ENCODE measurements at regions of chrX and their contacts with region 1.

Region 1: DNA sequence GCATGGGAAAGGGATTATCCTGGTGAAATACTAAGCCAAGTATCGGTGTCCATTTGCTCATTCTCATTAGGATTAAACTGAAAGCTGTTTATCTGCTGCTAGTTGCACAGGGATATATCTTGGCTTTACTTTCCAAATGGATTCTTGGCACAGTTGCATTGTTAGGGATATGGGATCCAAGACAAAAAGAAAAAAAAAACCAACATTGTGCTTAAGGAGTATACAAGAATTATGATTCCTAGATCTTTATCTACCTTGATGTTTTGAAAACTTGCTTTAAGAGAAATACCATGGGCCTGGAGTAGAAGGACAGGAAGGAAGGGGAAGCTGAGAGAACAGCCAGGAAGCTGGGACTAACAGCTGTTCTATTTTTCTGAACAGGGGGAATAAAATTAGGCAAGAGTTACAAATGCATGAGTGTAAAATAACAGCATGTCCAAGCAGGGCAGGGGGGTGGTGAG is 107.6 kb downstream of the ATXN3L start:
- DNase-seq: peak; percentile 82
- H3K4me3 ChIP-seq: no peak overlapping the region
- H3K27ac ChIP-seq: peak overlapping the region; percentile 63
- H3K4me1 ChIP-seq: peaks cover 24% of the 10 kb centered on the region
- H3K27me3 ChIP-seq: no peaks in the 10 kb centered on the region
- CTCF ChIP-seq: no peak
- POLR2A ChIP-seq: no peak

Region 2: GRCh38 chrX:13123857-13124345 is 88.3 kb before region 1 on chrX:
- CTCF ChIA-PET with region 1: interaction called, 3 read pairs
- POLR2A ChIA-PET with region 1: no interaction called
- dilution Hi-C with region 1: no loop called
- intact Hi-C with region 1: loop called (anchors 1 kb)
- DNase-seq: peak; percentile 93
- H3K4me3 ChIP-seq: no peak overlapping the region
- H3K27ac ChIP-seq: peak overlapping the region; percentile 91
- H3K4me1 ChIP-seq: peaks cover 59% of the 10 kb centered on the region
- H3K27me3 ChIP-seq: no peaks in the 10 kb centered on the region
- CTCF ChIP-seq: no peak
- POLR2A ChIP-seq: peak; percentile 45

Region 3: DNA sequence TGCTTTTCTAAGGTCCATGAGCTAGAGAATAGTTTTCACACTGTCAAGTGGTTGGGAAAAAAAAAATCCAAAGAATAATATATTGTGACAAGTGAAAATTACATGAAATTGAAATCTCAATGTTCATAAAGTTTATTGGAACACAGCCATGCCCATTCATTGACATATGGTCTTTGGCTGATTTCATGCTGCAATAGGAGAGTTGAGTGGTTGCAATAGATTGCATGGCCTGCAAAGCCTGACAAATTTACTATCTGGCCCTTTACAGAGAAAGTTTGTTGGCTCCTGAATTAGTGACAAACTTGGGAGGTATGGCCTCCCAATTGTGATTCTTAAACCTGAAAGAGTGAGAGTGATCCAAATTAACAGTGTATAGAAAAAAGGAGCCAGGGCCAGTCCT is 52.3 kb before region 1 on chrX:
- CTCF ChIA-PET with region 1: no interaction called
- POLR2A ChIA-PET with region 1: no interaction called
- dilution Hi-C with region 1: no loop called
- intact Hi-C with region 1: loop called (anchors 2 kb)
- DNase-seq: no peak
- H3K4me3 ChIP-seq: no peak overlapping the region
- H3K27ac ChIP-seq: peak overlapping the region; percentile 73
- H3K4me1 ChIP-seq: peaks cover 20% of the 10 kb centered on the region
- H3K27me3 ChIP-seq: no peaks in the 10 kb centered on the region
- CTCF ChIP-seq: no peak
- POLR2A ChIP-seq: no peak

Region 4: DNA sequence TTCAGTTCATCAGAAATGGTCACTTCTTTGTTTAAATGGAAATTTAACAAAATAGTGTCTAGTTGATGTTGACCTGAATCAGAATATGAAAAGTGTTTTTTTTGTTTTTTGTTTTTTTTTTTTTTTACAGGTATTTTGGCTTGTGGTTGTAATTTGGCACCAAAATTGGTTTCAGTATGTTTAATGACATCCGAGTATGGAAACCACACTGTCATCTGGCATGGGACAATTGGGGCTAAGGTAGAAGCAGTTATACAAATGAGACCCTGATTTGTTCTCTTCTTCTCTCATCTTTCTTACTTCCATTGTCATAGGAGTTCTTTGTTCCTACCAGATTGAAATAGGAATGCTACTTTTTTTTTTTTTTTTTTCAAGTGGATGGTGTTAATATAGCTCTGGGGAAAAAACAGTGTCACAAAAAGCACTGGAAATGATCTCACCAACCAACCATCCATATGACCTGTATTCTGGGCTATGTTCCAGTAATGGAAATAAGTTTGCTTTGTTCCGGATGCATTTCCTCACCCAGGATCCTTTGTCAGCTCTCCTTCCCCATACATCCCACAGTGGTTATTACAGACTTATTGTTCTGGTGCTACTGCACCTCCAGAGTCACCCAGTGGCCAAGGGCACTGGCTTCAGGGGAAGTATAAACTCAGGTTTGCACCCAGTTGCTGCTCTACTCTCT is 11.8 kb after region 1 on chrX:
- CTCF ChIA-PET with region 1: interaction called, 7 read pairs
- POLR2A ChIA-PET with region 1: no interaction called
- dilution Hi-C with region 1: no loop called
- intact Hi-C with region 1: loop called (anchors 1 kb)
- DNase-seq: peak; percentile 91
- H3K4me3 ChIP-seq: no peak overlapping the region
- H3K27ac ChIP-seq: peak overlapping the region; percentile 87
- H3K4me1 ChIP-seq: peaks cover 16% of the 10 kb centered on the region
- H3K27me3 ChIP-seq: no peaks in the 10 kb centered on the region
- CTCF ChIP-seq: peak in 1 of 2 donors; percentile 14
- POLR2A ChIP-seq: no peak

Region 5: GRCh38 chrX:13283950-13284914 is 72.0 kb after region 1 on chrX:
- CTCF ChIA-PET with region 1: no interaction called
- POLR2A ChIA-PET with region 1: no interaction called
- dilution Hi-C with region 1: no loop called
- intact Hi-C with region 1: loop called (anchors 2 kb)
- DNase-seq: peak; percentile 71
- H3K4me3 ChIP-seq: no peak overlapping the region
- H3K27ac ChIP-seq: peak overlapping the region; percentile 62
- H3K4me1 ChIP-seq: peaks cover 49% of the 10 kb centered on the region
- H3K27me3 ChIP-seq: no peaks in the 10 kb centered on the region
- CTCF ChIP-seq: no peak
- POLR2A ChIP-seq: no peak

Region 6: DNA sequence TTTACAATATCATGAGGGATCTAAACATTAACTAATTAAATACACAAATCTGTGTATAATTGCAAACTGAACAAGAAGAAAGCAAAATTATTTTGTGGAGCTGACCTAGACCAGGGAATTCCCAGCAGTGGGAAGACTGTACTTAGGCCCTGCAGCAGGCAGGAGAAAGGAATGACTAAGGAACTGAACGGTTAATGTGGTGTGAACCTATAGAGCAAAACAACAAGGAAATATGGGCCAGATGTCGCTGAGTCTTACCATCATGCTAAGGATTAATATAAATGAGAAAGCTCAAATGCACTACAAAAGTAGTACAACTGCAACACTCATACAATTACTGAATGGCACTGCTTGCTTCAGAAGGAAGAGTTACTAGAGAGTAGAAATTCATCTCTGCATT is 228.0 kb after region 1 on chrX:
- CTCF ChIA-PET with region 1: no interaction called
- POLR2A ChIA-PET with region 1: no interaction called
- dilution Hi-C with region 1: no loop called
- intact Hi-C with region 1: no loop called
- DNase-seq: no peak
- H3K4me3 ChIP-seq: no peak overlapping the region
- H3K27ac ChIP-seq: no peak overlapping the region
- H3K4me1 ChIP-seq: no peaks in the 10 kb centered on the region
- H3K27me3 ChIP-seq: no peaks in the 10 kb centered on the region
- CTCF ChIP-seq: no peak
- POLR2A ChIP-seq: no peak